Activated B cell treated with CpG ODN at 0.5 μM for 24 hours (primary cell): ENCODE measurements at regions of chr6 and their contacts with region 1.

Region 1: GRCh38 chr6:30102970-30103874 is 9.7 kb downstream of the TRIM31 start:
- DNase-seq: peak; percentile 68
- ATAC-seq: peak; percentile 83
- H3K4me3 Mint-ChIP-seq: peak overlapping the region; percentile 89
- H3K27ac Mint-ChIP-seq: peak overlapping the region; percentile 70
- H3K4me1 Mint-ChIP-seq: peaks cover 38% of the 10 kb centered on the region
- H3K27me3 Mint-ChIP-seq: peaks cover 47% of the 10 kb centered on the region
- CTCF ChIP-seq: peak; percentile 41

Region 2: GRCh38 chr6:29955783-29956182 is 147.4 kb before region 1 on chr6:
- CTCF ChIA-PET with region 1: no interaction called
- POLR2A ChIA-PET with region 1: no interaction called
- intact Hi-C with region 1: no loop called
- DNase-seq: no peak
- ATAC-seq: no peak
- H3K4me3 Mint-ChIP-seq: no peak overlapping the region
- H3K27ac Mint-ChIP-seq: no peak overlapping the region
- H3K4me1 Mint-ChIP-seq: peaks cover 24% of the 10 kb centered on the region
- H3K27me3 Mint-ChIP-seq: no peaks in the 10 kb centered on the region
- CTCF ChIP-seq: no peak

Region 3: DNA sequence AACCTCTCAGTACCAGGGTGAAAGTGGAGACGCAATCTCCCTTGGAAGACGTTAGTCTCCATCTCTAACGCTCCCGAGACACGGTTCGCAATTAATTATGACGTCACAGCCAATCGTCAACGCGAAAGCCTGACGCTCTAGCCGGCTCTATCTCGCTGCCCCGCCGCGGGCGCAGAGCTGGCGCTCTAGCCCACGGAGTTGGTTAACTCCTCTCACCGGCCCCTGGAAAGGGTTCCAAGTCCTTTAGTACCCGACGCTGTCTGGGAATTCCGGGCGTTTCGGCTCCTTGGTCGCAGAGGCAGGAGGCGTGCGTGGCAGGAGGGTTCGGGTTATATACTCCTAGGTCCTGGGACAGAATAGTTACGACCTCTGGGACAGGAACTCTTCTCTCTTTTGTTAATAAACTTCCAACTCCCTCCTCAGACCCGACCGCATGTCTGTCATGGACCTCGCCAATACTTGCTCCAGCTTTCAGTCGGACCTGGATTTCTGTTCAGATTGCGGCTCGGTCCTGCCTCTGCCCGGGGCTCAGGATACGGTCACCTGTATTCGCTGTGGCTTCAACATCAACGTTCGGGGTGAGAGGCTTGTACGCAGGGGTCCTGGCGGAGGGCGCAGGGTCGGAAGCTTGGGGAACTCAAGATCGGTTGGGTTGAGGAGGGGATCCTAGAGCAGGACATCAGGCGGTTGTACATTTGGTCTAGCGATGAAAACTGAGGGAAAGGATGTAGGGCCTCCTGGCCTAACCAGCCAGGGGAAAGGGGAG is 41.9 kb before region 1 on chr6 and contains the start of gene POLR1H:
- CTCF ChIA-PET with region 1: interaction called, 7 read pairs
- POLR2A ChIA-PET with region 1: interaction called, 20 read pairs
- intact Hi-C with region 1: no loop called
- DNase-seq: peak; percentile 73
- ATAC-seq: peak; percentile 91
- H3K4me3 Mint-ChIP-seq: peak within 1 kb of the TSS; percentile 98
- H3K27ac Mint-ChIP-seq: peak within 1 kb of the TSS; percentile 97
- H3K4me1 Mint-ChIP-seq: peaks cover 44% of the 10 kb centered on the region
- H3K27me3 Mint-ChIP-seq: no peaks in the 10 kb centered on the region
- CTCF ChIP-seq: no peak
- total RNA-seq, gene POLR1H: 44.1 and 50.5 TPM in 2 replicates

Region 4: GRCh38 chr6:30130887-30131862 is 28.0 kb after region 1 on chr6:
- CTCF ChIA-PET with region 1: interaction called, 138 read pairs
- POLR2A ChIA-PET with region 1: interaction called, 5 read pairs
- intact Hi-C with region 1: loop called (anchors 1 kb)
- DNase-seq: no peak
- ATAC-seq: peak; percentile 89
- H3K4me3 Mint-ChIP-seq: no peak overlapping the region
- H3K27ac Mint-ChIP-seq: no peak overlapping the region
- H3K4me1 Mint-ChIP-seq: peaks cover 15% of the 10 kb centered on the region
- H3K27me3 Mint-ChIP-seq: peaks cover 62% of the 10 kb centered on the region
- CTCF ChIP-seq: peak; percentile 83

Region 5: GRCh38 chr6:30259140-30260035 is 156.2 kb after region 1 on chr6:
- CTCF ChIA-PET with region 1: no interaction called
- POLR2A ChIA-PET with region 1: no interaction called
- intact Hi-C with region 1: loop called (anchors 2 kb)
- DNase-seq: peak; percentile 58
- ATAC-seq: peak; percentile 94
- H3K4me3 Mint-ChIP-seq: peak overlapping the region; percentile 98
- H3K27ac Mint-ChIP-seq: peak overlapping the region; percentile 97
- H3K4me1 Mint-ChIP-seq: peaks cover 36% of the 10 kb centered on the region
- H3K27me3 Mint-ChIP-seq: no peaks in the 10 kb centered on the region
- CTCF ChIP-seq: no peak

Region 6: DNA sequence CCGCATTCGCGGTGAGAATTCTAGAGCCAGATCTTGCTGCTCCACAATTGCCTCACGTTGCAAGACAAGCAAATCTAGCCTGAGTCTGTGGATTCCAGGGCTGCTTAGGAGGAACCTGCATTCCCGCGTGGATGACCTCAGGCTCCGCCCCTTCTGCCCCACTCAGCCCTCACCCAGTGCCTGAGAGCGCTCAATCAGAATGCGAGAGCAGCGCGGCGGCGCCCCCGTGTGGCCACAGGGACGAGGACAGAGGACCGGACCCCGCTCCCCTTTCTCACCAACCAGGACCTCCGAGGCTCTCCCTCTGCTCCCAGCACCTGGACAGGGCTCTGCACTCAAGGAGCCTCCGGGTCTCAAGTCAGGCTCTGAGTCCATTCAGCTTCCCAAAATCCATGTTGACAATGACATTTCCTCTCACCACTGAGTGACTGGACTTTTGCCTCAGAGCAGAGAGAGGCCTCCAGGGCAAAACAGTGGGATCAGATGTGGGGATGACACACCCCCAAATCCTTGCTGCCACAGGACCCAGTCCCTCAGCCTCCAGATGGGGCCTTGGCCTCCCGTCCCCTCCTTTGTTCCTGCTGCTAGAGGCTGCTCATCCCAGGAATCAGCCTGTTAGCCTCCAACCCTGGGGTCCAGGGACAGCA is 293.7 kb after region 1 on chr6:
- CTCF ChIA-PET with region 1: interaction called, 4 read pairs
- POLR2A ChIA-PET with region 1: no interaction called
- intact Hi-C with region 1: loop called (anchors 1 kb)
- DNase-seq: peak; percentile 83
- ATAC-seq: peak; percentile 100
- H3K4me3 Mint-ChIP-seq: no peak overlapping the region
- H3K27ac Mint-ChIP-seq: no peak overlapping the region
- H3K4me1 Mint-ChIP-seq: peaks cover 4% of the 10 kb centered on the region
- H3K27me3 Mint-ChIP-seq: peaks cover 26% of the 10 kb centered on the region
- CTCF ChIP-seq: peak; percentile 41

Region 7: GRCh38 chr6:31752739-31753319 is 1649.6 kb after region 1 on chr6:
- CTCF ChIA-PET with region 1: no interaction called
- POLR2A ChIA-PET with region 1: no interaction called
- intact Hi-C with region 1: no loop called
- DNase-seq: no peak
- ATAC-seq: no peak
- H3K4me3 Mint-ChIP-seq: no peak overlapping the region
- H3K27ac Mint-ChIP-seq: no peak overlapping the region
- H3K4me1 Mint-ChIP-seq: no peaks in the 10 kb centered on the region
- H3K27me3 Mint-ChIP-seq: no peaks in the 10 kb centered on the region
- CTCF ChIP-seq: no peak